Caco-2 (cell line): ENCODE measurements at regions of chr10 and their contacts with region 1.

Region 1: DNA sequence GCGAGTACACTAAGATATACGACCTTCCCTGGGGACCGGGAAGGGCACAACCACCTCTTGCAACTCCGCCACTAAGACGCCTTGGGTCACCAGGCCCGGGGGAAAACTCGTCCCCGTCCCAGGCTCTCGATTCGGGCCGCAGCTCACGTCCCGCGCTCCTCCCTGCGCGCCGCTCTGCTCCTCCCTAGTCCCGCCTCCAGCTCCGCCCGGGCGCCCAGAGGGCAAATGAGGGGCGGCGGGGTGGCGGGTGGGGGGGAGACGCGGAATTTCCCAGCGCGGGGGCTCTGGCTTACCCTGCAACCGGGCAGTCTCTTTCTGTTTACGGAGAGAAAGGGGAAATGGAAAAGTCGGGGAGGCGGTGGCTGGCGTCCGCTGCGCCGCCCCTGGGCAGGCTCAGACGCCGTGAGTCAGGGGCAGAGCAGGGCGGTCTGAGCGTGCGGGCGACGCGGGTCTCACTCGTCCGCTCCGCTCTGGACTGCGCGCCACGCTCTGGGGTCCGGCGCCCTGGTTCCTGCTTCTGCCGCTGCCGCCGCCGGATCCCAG is at the start of gene MAP3K8:
- DNase-seq: peak; percentile 95 to 96
- H3K4me3 ChIP-seq: peak within 1 kb of the TSS; percentile 91
- H3K4me3 Mint-ChIP-seq: peak within 1 kb of the TSS; percentile 92
- H3K27ac Mint-ChIP-seq: peak within 1 kb of the TSS; percentile 97
- H3K4me1 ChIP-seq: peaks cover 47% of the 10 kb centered on the region
- H3K4me1 Mint-ChIP-seq: peaks cover 56% of the 10 kb centered on the region
- H3K27me3 ChIP-seq: no peaks in the 10 kb centered on the region
- H3K27me3 Mint-ChIP-seq: no peaks in the 10 kb centered on the region
- CTCF ChIP-seq: peak in 1 of 2 experiments; percentile 1
- total RNA-seq, gene MAP3K8: 17.9 and 18.8 TPM in 2 replicates

Region 2: GRCh38 chr10:30422981-30423654 is 10.7 kb before region 1 on chr10:
- CTCF ChIA-PET with region 1: interaction called, 21 read pairs
- POLR2A ChIA-PET with region 1: interaction called, 98 read pairs
- intact Hi-C with region 1: loop called (anchors 1 kb)
- DNase-seq: peak; percentile 94 to 95
- H3K4me3 ChIP-seq: no peak overlapping the region
- H3K4me3 Mint-ChIP-seq: peak overlapping the region; percentile 66
- H3K27ac Mint-ChIP-seq: peak overlapping the region; percentile 99
- H3K4me1 ChIP-seq: peaks cover 52% of the 10 kb centered on the region
- H3K4me1 Mint-ChIP-seq: peaks cover 45% of the 10 kb centered on the region
- H3K27me3 ChIP-seq: no peaks in the 10 kb centered on the region
- H3K27me3 Mint-ChIP-seq: no peaks in the 10 kb centered on the region
- CTCF ChIP-seq: no peak